HCT116 (cell line): ENCODE measurements at regions of chr1 and their contacts with region 1.

Region 1: GRCh38 chr1:36369061-36369861 is 16.5 kb downstream of the STK40 start:
- DNase-seq: peak; percentile 43
- ATAC-seq: peak; percentile 67
- H3K4me3 ChIP-seq: no peak overlapping the region
- H3K27ac ChIP-seq: peak overlapping the region; percentile 16; the same call in 1 of the 2 replicates
- H3K4me1 ChIP-seq: peaks cover 34 to 47% of the 10 kb centered on the region in 2 experiments
- H3K27me3 ChIP-seq: no peaks in the 10 kb centered on the region
- CTCF ChIP-seq: peak; percentile 87 to 89 (median 89)
- POLR2A ChIP-seq: no peak
- RAD21 ChIP-seq: peak; percentile 79

Region 2: DNA sequence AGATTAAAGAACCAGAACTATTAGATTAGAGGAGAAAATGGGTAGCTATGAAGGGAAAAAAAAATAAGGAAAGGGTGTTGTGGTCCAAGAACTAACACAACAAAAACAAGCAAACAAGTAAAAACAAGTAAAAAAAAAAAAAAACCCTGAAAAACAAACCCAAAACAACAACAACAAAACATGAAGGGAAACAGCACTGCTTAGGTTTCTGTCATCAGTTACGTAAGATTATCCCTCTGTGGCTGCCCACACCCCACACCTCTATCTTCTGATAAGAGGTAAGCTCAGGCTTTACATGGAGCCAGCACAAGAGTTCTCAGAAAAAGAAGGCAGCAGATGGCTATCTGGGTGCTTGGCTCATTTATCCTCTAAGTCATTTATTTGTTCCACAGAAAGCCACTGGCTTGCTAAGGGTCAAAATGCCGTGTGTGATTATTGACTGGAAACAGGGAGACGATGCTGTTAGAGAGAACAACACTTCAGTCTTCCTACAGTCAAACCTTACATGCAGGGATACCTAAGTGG is 869.5 kb before region 1 on chr1:
- CTCF ChIA-PET with region 1: no interaction called
- POLR2A ChIA-PET with region 1: no interaction called
- RAD21 ChIA-PET with region 1: no interaction called
- intact Hi-C with region 1: no loop called
- DNase-seq: no peak
- ATAC-seq: no peak
- H3K4me3 ChIP-seq: no peak overlapping the region
- H3K27ac ChIP-seq: no peak overlapping the region
- H3K4me1 ChIP-seq: no peaks in the 10 kb centered on the region
- H3K27me3 ChIP-seq: no peaks in the 10 kb centered on the region
- CTCF ChIP-seq: no peak
- POLR2A ChIP-seq: no peak
- RAD21 ChIP-seq: no peak

Region 3: GRCh38 chr1:36199934-36200741 is 169.1 kb before region 1 on chr1:
- CTCF ChIA-PET with region 1: no interaction called
- POLR2A ChIA-PET with region 1: no interaction called
- RAD21 ChIA-PET with region 1: no interaction called
- intact Hi-C with region 1: no loop called
- DNase-seq: no peak
- ATAC-seq: peak; percentile 50
- H3K4me3 ChIP-seq: no peak overlapping the region
- H3K27ac ChIP-seq: no peak overlapping the region
- H3K4me1 ChIP-seq: peaks cover 0 to 8% of the 10 kb centered on the region in 2 experiments; a peak in 1 of 4 replicates
- H3K27me3 ChIP-seq: no peaks in the 10 kb centered on the region
- CTCF ChIP-seq: no peak
- POLR2A ChIP-seq: no peak
- RAD21 ChIP-seq: peak; percentile 21; the same call in 1 of the 2 replicates

Region 4: GRCh38 chr1:36385410-36386257 is 16.4 kb after region 1 on chr1 and contains the start of gene STK40:
- CTCF ChIA-PET with region 1: interaction called, 6 read pairs
- POLR2A ChIA-PET with region 1: interaction called, 11 read pairs
- RAD21 ChIA-PET with region 1: no interaction called
- intact Hi-C with region 1: no loop called
- DNase-seq: peak; percentile 99
- ATAC-seq: peak; percentile 87
- H3K4me3 ChIP-seq: peak within 1 kb of the TSS; percentile 87 to 96
- H3K27ac ChIP-seq: peak within 1 kb of the TSS; percentile 89
- H3K4me1 ChIP-seq: peaks cover 16 to 32% of the 10 kb centered on the region in 2 experiments
- H3K27me3 ChIP-seq: no peaks in the 10 kb centered on the region
- CTCF ChIP-seq: no peak
- POLR2A ChIP-seq: no peak
- RAD21 ChIP-seq: no peak
- total RNA-seq, gene STK40: 33.9 TPM

Region 5: DNA sequence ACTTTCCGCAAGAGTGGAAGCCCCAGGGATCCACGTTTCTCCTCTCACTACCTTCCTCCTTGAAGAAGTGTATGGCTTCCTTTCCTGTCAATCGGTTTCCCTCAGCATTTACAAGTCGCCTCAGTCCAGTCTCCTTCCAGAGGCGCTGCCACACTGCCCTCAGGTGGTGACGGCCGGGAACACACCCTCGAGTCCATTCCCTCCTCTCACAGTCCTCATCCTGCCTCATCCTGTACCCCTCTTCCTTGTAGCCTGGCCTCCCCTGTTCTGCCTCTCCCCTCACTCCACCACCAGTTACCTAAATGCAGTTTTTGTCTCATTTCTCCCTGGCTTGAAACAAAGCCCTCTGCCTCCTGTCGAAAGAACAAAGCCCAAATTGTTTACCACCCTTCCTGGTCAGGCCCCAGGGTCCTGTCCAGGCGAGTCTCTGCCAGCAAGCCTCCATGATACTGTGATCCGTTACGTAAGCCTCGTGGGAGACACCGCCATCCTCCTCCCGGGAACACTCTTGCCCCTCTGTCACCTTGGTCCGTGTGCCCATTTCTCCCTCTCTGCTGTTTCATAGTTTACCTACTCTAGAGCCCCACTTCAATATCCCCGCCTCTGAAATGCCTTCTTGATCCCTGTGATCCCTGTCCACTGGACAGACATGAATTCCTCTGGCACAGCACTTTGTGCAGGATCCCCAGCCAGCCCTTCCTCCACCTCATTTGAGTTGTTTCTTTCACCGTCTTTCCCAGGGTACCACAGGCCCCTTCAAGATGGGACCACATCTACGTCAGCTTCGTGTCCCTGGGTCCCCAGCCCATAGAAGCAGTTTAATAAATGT is 51.8 kb after region 1 on chr1:
- CTCF ChIA-PET with region 1: interaction called, 5 read pairs
- POLR2A ChIA-PET with region 1: no interaction called
- RAD21 ChIA-PET with region 1: no interaction called
- intact Hi-C with region 1: loop called (anchors 1 kb)
- DNase-seq: peak; percentile 69
- ATAC-seq: peak; percentile 92
- H3K4me3 ChIP-seq: no peak overlapping the region
- H3K27ac ChIP-seq: no peak overlapping the region
- H3K4me1 ChIP-seq: peaks cover 6 to 27% of the 10 kb centered on the region in 2 experiments; a peak in 3 of 4 replicates
- H3K27me3 ChIP-seq: no peaks in the 10 kb centered on the region
- CTCF ChIP-seq: peak; percentile 89 to 94 (median 93)
- POLR2A ChIP-seq: no peak
- RAD21 ChIP-seq: peak; percentile 98

Region 6: DNA sequence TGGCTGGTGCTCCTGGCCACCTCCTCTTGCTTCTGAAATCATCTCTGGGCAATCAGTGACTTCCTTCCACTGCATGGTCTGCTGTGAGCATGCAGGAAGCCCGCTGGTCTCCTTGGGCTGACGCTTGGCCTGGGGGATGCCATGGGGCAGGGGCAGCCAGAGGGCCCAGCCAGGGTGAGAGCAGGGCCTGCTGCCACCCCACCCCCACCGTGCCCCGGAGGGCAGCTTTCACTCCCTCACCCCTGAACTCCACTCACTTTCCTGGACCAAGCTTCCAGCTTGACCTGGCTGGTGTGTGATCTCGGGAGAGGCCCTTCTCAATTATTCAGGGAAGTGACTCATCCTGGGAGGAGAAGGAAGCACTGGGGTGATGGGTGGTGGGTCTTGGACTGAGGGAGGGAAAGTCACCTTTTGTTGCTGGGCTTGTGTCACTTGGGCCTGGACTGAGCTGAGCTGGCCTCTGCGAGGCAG is 383.7 kb after region 1 on chr1:
- CTCF ChIA-PET with region 1: no interaction called
- POLR2A ChIA-PET with region 1: no interaction called
- RAD21 ChIA-PET with region 1: no interaction called
- intact Hi-C with region 1: no loop called
- DNase-seq: no peak
- ATAC-seq: peak; percentile 63
- H3K4me3 ChIP-seq: no peak overlapping the region
- H3K27ac ChIP-seq: no peak overlapping the region
- H3K4me1 ChIP-seq: peaks cover 2 to 11% of the 10 kb centered on the region in 2 experiments; a peak in 2 of 4 replicates
- H3K27me3 ChIP-seq: 0 out of 2 replicates have a peak, but pooled peaks cover 11% of the 10 kb centered on the region
- CTCF ChIP-seq: no peak
- POLR2A ChIP-seq: no peak
- RAD21 ChIP-seq: no peak